ENCODE measurements at regions of chr5 and their contacts with region 1.

Region 1: GRCh38 chr5:168947212-168947868 is 353.6 kb downstream of the SLIT3 start:
- H3K4me3 ChIP-seq: no peak overlapping the region
- H3K27ac ChIP-seq: no peak overlapping the region
- H3K4me1 ChIP-seq: no peaks in the 10 kb centered on the region
- CTCF ChIP-seq: peak; percentile 39; the same call in 1 of the 2 replicates

Region 2: GRCh38 chr5:168679515-168679920 is 267.8 kb before region 1 on chr5:
- CTCF ChIA-PET with region 1: interaction called, 12 read pairs
- POLR2A ChIA-PET with region 1: no interaction called
- H3K4me3 ChIP-seq: no peak overlapping the region
- H3K27ac ChIP-seq: no peak overlapping the region
- H3K4me1 ChIP-seq: no peaks in the 10 kb centered on the region
- CTCF ChIP-seq: peak; percentile 75; the same call in 1 of the 2 replicates

Region 3: GRCh38 chr5:169548315-169548714 is 601.0 kb after region 1 on chr5:
- CTCF ChIA-PET with region 1: interaction called, 12 read pairs
- POLR2A ChIA-PET with region 1: no interaction called
- H3K4me3 ChIP-seq: no peak overlapping the region
- H3K27ac ChIP-seq: no peak overlapping the region
- H3K4me1 ChIP-seq: no peaks in the 10 kb centered on the region
- CTCF ChIP-seq: peak; percentile 55